Prostate gland (tissue), 2 donors: ENCODE measurements at regions of chr16 and their contacts with region 1.

Region 1: DNA sequence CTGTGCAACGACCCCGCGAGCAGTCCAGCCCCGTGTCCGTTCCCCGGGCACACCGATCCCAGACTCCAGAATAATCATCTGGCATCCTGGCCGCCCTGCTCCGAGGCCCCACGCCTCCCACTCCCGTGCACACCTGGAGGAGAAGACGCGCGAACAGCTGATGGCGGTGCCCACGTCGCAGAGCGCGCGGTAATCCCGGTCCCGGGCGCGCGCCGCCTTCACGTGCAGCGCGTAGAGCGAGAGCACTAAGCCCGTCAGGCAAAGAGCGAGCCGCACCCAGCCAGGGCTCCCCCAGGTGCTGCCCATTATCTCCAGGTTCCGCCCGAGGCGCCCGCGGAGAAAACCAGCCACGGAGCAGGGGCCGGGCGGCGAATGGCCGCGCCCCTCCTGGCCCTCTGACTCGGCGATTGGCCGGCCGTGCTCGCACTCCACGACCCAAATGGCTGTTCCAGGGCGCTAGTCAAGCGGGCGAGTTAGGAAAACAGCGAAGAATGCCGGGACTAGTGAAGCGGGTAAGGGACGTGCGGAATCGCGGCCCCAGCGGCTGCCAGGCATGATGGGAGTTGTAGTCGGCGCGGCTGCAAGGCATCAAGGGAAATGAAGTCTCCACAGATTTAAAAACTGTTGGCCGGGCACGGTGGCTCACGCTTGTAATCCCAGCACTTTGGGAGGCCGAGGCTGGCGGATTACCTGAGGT is at the start of gene VKORC1:
- DNase-seq: peak; percentile 96
- H3K4me3 ChIP-seq: peak within 1 kb of the TSS; percentile 58 to 60
- H3K27ac ChIP-seq: peak within 1 kb of the TSS; percentile 82
- H3K4me1 ChIP-seq: no peaks in the 10 kb centered on the region
- H3K27me3 ChIP-seq: no peaks in the 10 kb centered on the region
- CTCF ChIP-seq: peak in 2 of 4 experiments; percentile 34 to 46
- POLR2A ChIP-seq: peak; percentile 81
- total RNA-seq, gene VKORC1: 106 to 175 TPM

Region 2: GRCh38 chr16:31073968-31074813 is 20.4 kb before region 1 on chr16 and contains the starts of genes ZNF646 and ZNF668:
- intact Hi-C with region 1: loop called (anchors 2 kb)
- DNase-seq: peak; percentile 99
- H3K4me3 ChIP-seq: peak within 1 kb of the TSS; percentile 97 to 99
- H3K27ac ChIP-seq: peak within 1 kb of the TSS; percentile 91 to 94
- H3K4me1 ChIP-seq: peaks cover 10% of the 10 kb centered on the region
- H3K27me3 ChIP-seq: no peaks in the 10 kb centered on the region
- CTCF ChIP-seq: peak in 1 of 4 experiments; percentile 10
- POLR2A ChIP-seq: peak; percentile 55
- total RNA-seq, gene ZNF646: 26.3 to 33.7 TPM
- total RNA-seq, gene ZNF668: 15.6 to 21.4 TPM